Activated CD4-positive, alpha-beta T cell treated with anti-CD3 and anti-CD28 coated beads for 36 hours (primary cell): ENCODE measurements at regions of chr7 and their contacts with region 1.

Region 1: GRCh38 chr7:95527033-95527775 is 41.5 kb downstream of the ASB4 start:
- DNase-seq: peak; percentile 30
- ATAC-seq: no peak
- H3K4me3 Mint-ChIP-seq: no peak overlapping the region
- H3K27ac Mint-ChIP-seq: no peak overlapping the region
- H3K4me1 Mint-ChIP-seq: no peaks in the 10 kb centered on the region
- H3K27me3 Mint-ChIP-seq: peaks cover 13% of the 10 kb centered on the region

Region 2: GRCh38 chr7:95335093-95335492 is 192.1 kb before region 1 on chr7:
- CTCF ChIA-PET with region 1: no interaction called
- POLR2A ChIA-PET with region 1: no interaction called
- intact Hi-C with region 1: no loop called
- DNase-seq: no peak
- ATAC-seq: no peak
- H3K4me3 Mint-ChIP-seq: no peak overlapping the region
- H3K27ac Mint-ChIP-seq: no peak overlapping the region
- H3K4me1 Mint-ChIP-seq: peaks cover 10% of the 10 kb centered on the region
- H3K27me3 Mint-ChIP-seq: no peaks in the 10 kb centered on the region

Region 3: GRCh38 chr7:95454438-95455045 is 72.7 kb before region 1 on chr7:
- CTCF ChIA-PET with region 1: no interaction called
- POLR2A ChIA-PET with region 1: no interaction called
- intact Hi-C with region 1: no loop called
- DNase-seq: no peak
- ATAC-seq: no peak
- H3K4me3 Mint-ChIP-seq: no peak overlapping the region
- H3K27ac Mint-ChIP-seq: no peak overlapping the region
- H3K4me1 Mint-ChIP-seq: no peaks in the 10 kb centered on the region
- H3K27me3 Mint-ChIP-seq: peaks cover 3% of the 10 kb centered on the region

Region 4: GRCh38 chr7:95684037-95684436 is 156.8 kb after region 1 on chr7:
- CTCF ChIA-PET with region 1: interaction called, 36 read pairs
- POLR2A ChIA-PET with region 1: no interaction called
- intact Hi-C with region 1: loop called (anchors 1 kb)
- DNase-seq: no peak
- ATAC-seq: no peak
- H3K4me3 Mint-ChIP-seq: no peak overlapping the region
- H3K27ac Mint-ChIP-seq: no peak overlapping the region
- H3K4me1 Mint-ChIP-seq: no peaks in the 10 kb centered on the region
- H3K27me3 Mint-ChIP-seq: no peaks in the 10 kb centered on the region

Region 5: GRCh38 chr7:95690367-95690947 is 163.3 kb after region 1 on chr7:
- CTCF ChIA-PET with region 1: interaction called, 36 read pairs
- POLR2A ChIA-PET with region 1: no interaction called
- intact Hi-C with region 1: loop called (anchors 1 kb)
- DNase-seq: peak; percentile 6
- ATAC-seq: peak; percentile 63
- H3K4me3 Mint-ChIP-seq: no peak overlapping the region
- H3K27ac Mint-ChIP-seq: no peak overlapping the region
- H3K4me1 Mint-ChIP-seq: peaks cover 3% of the 10 kb centered on the region
- H3K27me3 Mint-ChIP-seq: peaks cover 6% of the 10 kb centered on the region

Region 6: GRCh38 chr7:95845007-95845406 is 317.8 kb after region 1 on chr7:
- CTCF ChIA-PET with region 1: no interaction called
- POLR2A ChIA-PET with region 1: no interaction called
- intact Hi-C with region 1: no loop called
- DNase-seq: no peak
- ATAC-seq: no peak
- H3K4me3 Mint-ChIP-seq: no peak overlapping the region
- H3K27ac Mint-ChIP-seq: no peak overlapping the region
- H3K4me1 Mint-ChIP-seq: no peaks in the 10 kb centered on the region
- H3K27me3 Mint-ChIP-seq: peaks cover 3% of the 10 kb centered on the region

Region 7: DNA sequence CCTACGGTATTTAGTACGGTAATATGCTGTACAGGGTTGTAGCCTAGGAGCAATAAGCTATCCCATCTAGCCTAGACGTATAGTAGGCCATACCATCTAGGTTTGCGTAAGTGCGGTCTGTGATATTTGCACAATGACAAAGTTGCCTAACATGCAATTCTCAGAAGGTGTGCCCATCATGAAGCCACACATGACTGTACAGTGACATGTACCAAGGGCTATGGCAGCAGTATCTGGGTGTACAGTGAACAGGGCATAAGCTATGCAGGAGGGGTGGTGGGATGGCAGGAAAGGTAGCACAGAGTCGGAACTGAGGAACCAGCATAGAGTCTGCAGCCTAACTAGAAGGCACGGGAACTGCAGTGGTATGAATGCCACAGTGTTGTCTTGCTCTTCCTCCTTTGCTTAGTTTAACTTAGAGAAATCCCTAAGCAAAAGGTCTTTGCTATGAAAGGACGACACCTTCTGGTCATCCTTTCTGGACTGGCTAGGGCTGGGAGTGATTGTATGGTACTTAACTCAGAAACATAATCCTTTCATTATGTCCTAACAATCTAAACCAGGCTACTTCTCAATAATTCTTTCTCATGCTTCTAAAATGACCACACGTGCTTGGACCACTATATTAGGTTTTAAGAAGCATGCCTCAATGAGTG is 338.6 kb after region 1 on chr7:
- CTCF ChIA-PET with region 1: interaction called, 4 read pairs
- POLR2A ChIA-PET with region 1: no interaction called
- intact Hi-C with region 1: loop called (anchors 1 to 5 kb)
- DNase-seq: no peak
- ATAC-seq: no peak
- H3K4me3 Mint-ChIP-seq: no peak overlapping the region
- H3K27ac Mint-ChIP-seq: no peak overlapping the region
- H3K4me1 Mint-ChIP-seq: no peaks in the 10 kb centered on the region
- H3K27me3 Mint-ChIP-seq: peaks cover 4% of the 10 kb centered on the region

Region 8: DNA sequence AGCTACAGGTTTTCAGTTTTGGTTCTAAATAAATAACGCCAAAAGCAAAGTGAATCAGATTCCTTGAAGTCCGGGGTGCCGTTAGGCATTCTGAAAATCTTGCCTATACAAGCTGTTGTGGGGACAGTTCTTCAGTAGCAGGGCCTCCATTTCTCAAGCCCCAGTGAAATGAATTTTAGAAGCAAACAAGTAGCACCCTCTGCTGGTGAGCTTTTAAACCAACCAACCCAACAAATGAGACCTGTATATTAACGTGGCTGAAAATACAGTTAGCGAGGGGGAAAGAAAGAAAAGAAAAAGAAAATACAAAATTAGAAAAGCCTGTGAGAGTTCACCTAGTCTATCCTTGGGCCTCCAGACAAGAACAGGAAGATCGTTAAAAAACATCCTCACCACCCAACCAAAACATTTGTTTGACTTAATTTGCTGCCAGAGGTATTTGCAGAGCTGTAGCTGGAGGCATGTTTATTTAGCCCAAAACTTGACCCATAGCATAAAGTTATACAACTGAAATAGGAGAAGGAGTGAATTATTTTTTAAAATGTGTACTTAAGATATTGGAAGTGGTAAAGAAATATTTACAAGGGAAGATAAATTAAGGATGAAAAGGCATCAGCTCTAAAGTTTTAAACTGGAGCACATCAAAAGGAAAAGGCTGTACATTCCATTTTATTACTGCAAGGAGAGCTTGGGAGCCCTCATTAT is 344.0 kb after region 1 on chr7:
- CTCF ChIA-PET with region 1: interaction called, 4 read pairs
- POLR2A ChIA-PET with region 1: no interaction called
- intact Hi-C with region 1: loop called (anchors 1 to 5 kb)
- DNase-seq: peak; percentile 29
- ATAC-seq: no peak
- H3K4me3 Mint-ChIP-seq: no peak overlapping the region
- H3K27ac Mint-ChIP-seq: no peak overlapping the region
- H3K4me1 Mint-ChIP-seq: no peaks in the 10 kb centered on the region
- H3K27me3 Mint-ChIP-seq: peaks cover 10% of the 10 kb centered on the region